ENCODE measurements at regions of chr1 and their contacts with region 1.

Region 1: DNA sequence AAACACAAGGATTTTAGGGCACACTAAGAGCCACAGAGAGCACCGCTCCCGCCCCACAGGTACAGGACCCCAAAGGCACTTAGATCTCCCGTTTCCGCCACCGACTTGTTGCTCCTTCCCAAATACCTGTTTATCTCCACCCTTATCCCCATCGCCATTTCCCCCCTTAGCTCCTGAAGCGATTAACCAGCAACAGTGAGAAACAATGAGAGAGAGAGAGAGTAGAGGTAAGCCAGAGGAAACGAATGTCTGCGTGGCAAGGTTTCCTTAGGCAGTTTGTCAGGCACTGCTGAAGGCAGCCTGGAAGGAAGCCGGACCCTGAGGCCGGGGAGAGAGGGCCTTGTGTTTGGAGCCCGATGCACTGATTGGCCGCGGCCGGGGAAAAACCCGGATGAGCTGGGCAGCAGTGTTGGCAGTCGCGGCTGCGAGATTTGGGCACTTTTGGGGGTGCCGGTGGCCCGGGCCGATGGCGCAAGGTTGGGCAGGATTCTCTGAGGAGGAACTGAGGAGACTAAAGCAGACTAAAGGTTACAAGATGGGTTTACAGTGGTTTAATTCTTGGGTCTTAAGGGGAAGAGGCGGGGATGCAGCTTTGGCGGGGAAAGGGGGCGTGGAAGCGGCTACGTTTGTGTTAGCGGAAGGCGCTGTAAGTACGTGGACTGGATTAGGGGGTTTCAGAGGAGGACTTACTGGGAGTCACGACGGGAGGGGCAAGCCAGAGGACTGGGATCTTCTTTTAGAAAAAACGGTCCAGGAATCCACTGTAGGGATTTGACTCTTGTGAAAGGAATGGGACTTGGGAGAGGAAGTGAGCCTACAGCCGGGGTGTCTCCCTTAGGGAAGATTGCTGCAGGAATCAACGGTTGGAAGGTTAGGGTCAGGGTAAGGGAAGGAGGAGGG is at the start of gene GORAB:
- DNase-seq: peak; percentile 92 to 95 (median 93)
- ATAC-seq: peak; percentile 99
- H3K4me3 ChIP-seq: peak within 1 kb of the TSS; percentile 36 to 82 (median 72)
- H3K27ac ChIP-seq: peak within 1 kb of the TSS; percentile 89 to 96 (median 92)
- H3K4me1 ChIP-seq: peaks cover 0 to 28% (median 17%) of the 10 kb centered on the region in 12 donors
- H3K27me3 ChIP-seq: no peaks in the 10 kb centered on the region
- CTCF ChIP-seq: no peak
- POLR2A ChIP-seq: peak; percentile 37 to 80
- total RNA-seq, gene GORAB: 4.7 to 15.5 (median 7.6) TPM

Region 2: DNA sequence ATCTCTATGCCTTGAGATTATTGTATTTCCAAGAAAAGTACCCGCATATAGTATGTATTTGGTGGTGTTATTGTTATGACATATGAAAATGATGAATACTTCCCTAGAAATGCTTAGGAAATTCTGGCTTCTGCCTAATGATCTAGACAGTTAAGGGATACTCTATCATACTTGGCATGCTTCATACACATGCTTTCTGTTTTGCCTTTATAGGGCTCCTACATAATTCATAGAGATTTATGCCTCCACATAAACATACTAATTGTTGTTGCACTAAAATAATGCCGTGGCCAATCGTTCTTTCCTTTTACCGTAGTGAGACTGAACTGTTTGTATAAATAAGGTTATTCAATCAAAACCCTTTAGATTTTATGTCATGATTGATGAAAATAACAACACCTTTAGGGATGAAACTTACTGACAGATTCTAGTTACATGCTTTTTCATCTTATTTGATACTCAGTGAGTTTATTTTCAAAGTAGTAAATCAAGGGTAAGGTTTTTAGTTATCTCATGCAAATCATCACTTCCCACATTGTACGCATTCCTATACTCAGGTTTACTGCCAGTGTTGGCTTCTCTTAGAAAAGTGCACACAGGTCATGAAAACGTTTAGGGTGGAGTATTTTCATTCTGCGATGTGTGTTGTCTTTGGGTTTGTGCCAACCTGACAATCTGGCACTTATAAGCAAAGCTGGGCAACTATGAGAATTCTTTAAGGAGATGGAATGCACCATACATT is 597.9 kb before region 1 on chr1:
- intact Hi-C with region 1: loop called in 1 of 10 experiments (anchors 10 kb)
- DNase-seq: no peak
- ATAC-seq: no peak
- H3K4me3 ChIP-seq: no peak overlapping the region
- H3K27ac ChIP-seq: no peak overlapping the region
- H3K4me1 ChIP-seq: peaks cover 0 to 8% (median 0%) of the 10 kb centered on the region in 12 donors
- H3K27me3 ChIP-seq: no peaks in the 10 kb centered on the region
- CTCF ChIP-seq: no peak
- POLR2A ChIP-seq: no peak

Region 3: DNA sequence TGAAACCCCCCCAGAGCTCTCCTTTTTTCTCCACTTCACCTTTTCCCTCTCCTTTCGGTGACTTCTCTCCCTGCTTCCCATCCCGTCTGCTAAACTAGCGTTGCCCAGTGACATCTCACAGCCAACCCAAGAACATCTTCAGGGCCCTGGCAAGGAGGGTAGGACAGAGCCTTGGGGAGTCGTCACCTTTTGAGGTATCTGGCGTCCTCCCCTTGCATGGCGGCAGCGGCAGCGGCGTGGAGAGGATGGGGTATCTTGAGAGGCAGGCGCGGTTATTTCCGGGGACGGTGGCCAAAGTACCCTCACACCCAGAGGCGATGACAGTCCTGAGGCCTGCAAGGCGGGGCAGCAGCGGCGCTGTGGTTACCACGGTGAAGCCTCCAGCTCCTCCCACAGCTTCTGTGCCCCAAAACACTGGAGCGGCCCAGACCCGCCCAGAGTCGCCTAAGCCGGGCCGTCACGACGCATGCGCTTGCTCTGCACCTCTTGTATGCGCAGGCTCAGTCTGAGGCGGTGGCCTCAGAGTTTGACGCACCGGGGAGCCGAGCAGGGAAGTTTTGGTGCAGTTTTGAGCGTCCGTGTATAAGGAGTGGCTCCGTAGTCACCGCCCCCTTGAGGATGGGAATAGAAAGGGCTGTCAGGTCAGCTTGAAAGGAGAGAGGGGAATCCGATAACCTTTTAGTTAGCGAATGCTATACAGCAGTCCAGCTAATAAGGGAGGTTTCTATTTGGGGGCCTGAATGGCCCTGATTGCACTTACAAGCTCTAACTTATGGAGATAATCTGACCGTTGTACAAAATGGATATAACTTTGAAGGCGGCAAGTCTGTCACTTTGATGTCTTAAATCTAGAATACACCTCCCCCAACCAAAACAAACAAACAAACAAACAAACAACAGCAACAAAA is 457.5 kb before region 1 on chr1 and contains the start of gene KIFAP3:
- intact Hi-C with region 1: loop called in 2 of 10 experiments (anchors 5 to 10 kb)
- DNase-seq: peak; percentile 97 to 99 (median 99)
- ATAC-seq: peak; percentile 99 to 100 (median 100)
- H3K4me3 ChIP-seq: peak within 1 kb of the TSS; percentile 40 to 83 (median 70)
- H3K27ac ChIP-seq: peak within 1 kb of the TSS; percentile 58 to 92 (median 86)
- H3K4me1 ChIP-seq: peaks cover 0 to 32% (median 17%) of the 10 kb centered on the region in 12 donors
- H3K27me3 ChIP-seq: no peaks in the 10 kb centered on the region
- CTCF ChIP-seq: peak; percentile 47 to 76 (median 60)
- POLR2A ChIP-seq: peak in 1 of 2 donors; percentile 75
- total RNA-seq, gene KIFAP3: 31.0 to 75.0 (median 53.5) TPM

Region 4: GRCh38 chr1:170200621-170201397 is 331.2 kb before region 1 on chr1:
- intact Hi-C with region 1: loop called in 1 of 10 experiments (anchors 2 kb)
- DNase-seq: no peak
- ATAC-seq: peak in 3 of 4 donors; percentile 39 to 64 (median 56)
- H3K4me3 ChIP-seq: peak overlapping the region in 3 of 12 donors; percentile 1 to 22 (median 18)
- H3K27ac ChIP-seq: peak overlapping the region; percentile 14 to 79 (median 64)
- H3K4me1 ChIP-seq: peaks cover 0 to 35% (median 17%) of the 10 kb centered on the region in 12 donors
- H3K27me3 ChIP-seq: no peaks in the 10 kb centered on the region
- CTCF ChIP-seq: peak in 4 of 12 donors; percentile 12 to 45 (median 22)
- POLR2A ChIP-seq: no peak

Region 5: GRCh38 chr1:170410401-170411166 is 121.4 kb before region 1 on chr1:
- intact Hi-C with region 1: loop called in 2 of 10 experiments (anchors 5 kb)
- DNase-seq: peak in 2 of 5 donors; percentile 21 to 34
- ATAC-seq: peak; percentile 71 to 94 (median 79)
- H3K4me3 ChIP-seq: no peak overlapping the region
- H3K27ac ChIP-seq: peak overlapping the region in 9 of 12 donors; percentile 18 to 79 (median 57)
- H3K4me1 ChIP-seq: peaks cover 4 to 43% (median 14%) of the 10 kb centered on the region in 12 donors
- H3K27me3 ChIP-seq: no peaks in the 10 kb centered on the region
- CTCF ChIP-seq: no peak
- POLR2A ChIP-seq: no peak

Region 6: GRCh38 chr1:170604065-170604464 is 72.1 kb after region 1 on chr1:
- intact Hi-C with region 1: no loop called
- DNase-seq: no peak
- ATAC-seq: no peak
- H3K4me3 ChIP-seq: no peak overlapping the region
- H3K27ac ChIP-seq: no peak overlapping the region
- H3K4me1 ChIP-seq: no peaks in the 10 kb centered on the region
- H3K27me3 ChIP-seq: no peaks in the 10 kb centered on the region
- CTCF ChIP-seq: no peak
- POLR2A ChIP-seq: no peak

Region 7: DNA sequence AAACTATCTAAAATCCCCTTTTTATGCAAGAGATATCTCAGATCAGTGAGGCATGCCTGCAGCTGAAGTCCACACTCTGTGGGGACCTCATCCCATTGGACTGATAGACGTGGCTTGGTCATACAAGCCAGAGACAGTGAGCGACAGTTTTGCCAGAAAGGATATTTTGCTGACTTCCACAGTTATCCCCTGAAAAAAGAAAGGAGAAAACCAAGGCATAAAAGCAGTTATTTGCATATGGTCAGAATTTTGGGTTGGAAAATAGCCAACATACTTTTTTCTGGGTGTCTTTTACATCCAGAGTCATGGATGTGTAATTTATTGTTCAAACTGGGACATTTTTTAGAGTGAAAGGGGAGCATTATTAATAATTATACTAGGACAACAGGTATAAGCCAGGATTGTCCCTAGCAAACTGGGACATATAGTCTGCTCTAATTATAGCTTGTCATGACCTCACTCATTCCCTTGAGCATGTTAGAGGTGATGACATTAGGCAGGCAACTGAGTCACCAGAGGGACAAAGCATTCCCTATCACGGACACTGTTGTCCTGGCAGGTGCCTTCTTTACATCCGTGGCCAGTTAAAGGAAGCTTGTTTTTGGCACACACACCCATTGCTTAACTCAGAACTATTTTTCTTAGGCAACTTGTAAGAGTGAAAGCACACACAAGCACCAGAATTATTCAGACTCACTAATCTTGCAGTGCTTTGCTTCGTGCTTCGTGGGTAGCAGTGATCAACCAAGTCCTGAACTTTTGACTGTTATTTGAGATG is 197.4 kb after region 1 on chr1:
- intact Hi-C with region 1: loop called in 1 of 10 experiments (anchors 10 kb)
- DNase-seq: peak in 3 of 5 donors; percentile 26 to 65 (median 31)
- ATAC-seq: peak; percentile 90 to 96 (median 92)
- H3K4me3 ChIP-seq: no peak overlapping the region
- H3K27ac ChIP-seq: peak overlapping the region; percentile 5 to 79 (median 68)
- H3K4me1 ChIP-seq: peaks cover 0 to 44% (median 29%) of the 10 kb centered on the region in 12 donors
- H3K27me3 ChIP-seq: no peaks in the 10 kb centered on the region
- CTCF ChIP-seq: no peak
- POLR2A ChIP-seq: no peak

Measured in heart left ventricle (tissue), 16 donors.